ENCODE measurements at regions of chr11 and their contacts with region 1.

Region 1: GRCh38 chr11:32561835-32562234 is 21.8 kb upstream of the EIF3M start:
- DNase-seq: no peak
- ATAC-seq: no peak

Region 2: DNA sequence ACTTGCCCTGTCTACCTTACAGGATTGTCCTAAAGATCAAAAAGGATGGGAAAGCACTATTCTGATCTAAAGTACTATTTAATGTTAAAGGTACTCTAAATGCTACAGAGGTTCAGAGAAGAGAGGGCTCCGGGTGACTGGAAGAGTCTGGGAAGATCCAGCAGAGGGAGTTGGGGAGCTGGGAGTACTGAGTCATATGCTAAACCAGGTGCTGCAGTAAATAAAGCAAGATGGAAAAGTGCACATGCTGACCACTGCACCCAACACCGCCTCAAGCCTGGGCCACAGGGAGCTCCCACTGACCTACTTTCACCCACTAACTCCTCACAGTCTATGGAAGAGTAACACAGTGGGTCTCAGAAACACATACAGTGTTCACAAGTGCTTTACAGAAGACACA is 175.8 kb before region 1 on chr11:
- intact Hi-C with region 1: loop called (anchors 10 kb)
- DNase-seq: no peak
- ATAC-seq: no peak

Region 3: GRCh38 chr11:32630844-32631243 is 69.0 kb after region 1 on chr11:
- intact Hi-C with region 1: no loop called
- DNase-seq: no peak
- ATAC-seq: no peak